Activated CD4-positive, alpha-beta memory T cell treated with anti-CD3 and anti-CD28 coated beads for 36 hours (primary cell): ENCODE measurements at regions of chr4 and their contacts with region 1.

Region 1: DNA sequence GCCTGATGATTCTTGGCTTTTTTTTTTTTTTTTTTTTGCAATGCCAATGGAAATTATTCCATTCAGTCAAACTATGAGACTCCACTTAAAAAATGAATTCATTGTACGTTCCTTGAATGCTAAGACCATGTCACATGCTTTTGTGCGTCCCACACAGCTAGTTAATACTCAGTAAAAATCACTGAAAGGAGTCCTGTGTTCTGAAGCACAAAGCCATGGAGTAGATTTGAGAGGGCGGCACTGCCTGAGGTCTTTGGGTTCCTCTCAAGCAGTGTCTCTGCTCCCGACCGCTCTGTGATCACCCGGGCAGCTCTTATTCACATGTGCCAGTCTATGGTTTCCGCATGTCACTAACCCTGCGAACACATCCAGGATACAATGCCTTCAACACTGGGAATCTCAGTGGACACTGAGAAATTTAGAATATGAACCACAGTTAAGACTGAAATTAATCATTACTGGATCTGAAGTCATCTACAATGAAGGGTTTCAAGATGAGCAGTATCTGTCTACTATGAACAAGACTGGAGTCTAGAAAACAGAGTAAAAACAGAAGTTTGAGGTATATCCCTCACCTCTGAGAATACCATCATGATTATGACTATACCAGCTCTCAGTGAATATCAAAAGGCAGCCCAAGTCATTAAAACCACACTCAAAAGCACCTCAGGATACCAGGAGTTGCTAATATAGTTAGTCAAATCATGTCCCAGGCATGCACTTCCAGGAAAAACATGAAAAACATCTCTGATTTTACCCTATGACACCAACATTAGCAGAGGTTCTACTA is 193.0 kb downstream of the MGST2 start:
- DNase-seq: peak; percentile 39
- H3K4me3 Mint-ChIP-seq: no peak overlapping the region
- H3K27ac Mint-ChIP-seq: peak overlapping the region; percentile 38
- H3K4me1 Mint-ChIP-seq: peaks cover 26% of the 10 kb centered on the region
- H3K27me3 Mint-ChIP-seq: peaks cover 23% of the 10 kb centered on the region

Region 2: DNA sequence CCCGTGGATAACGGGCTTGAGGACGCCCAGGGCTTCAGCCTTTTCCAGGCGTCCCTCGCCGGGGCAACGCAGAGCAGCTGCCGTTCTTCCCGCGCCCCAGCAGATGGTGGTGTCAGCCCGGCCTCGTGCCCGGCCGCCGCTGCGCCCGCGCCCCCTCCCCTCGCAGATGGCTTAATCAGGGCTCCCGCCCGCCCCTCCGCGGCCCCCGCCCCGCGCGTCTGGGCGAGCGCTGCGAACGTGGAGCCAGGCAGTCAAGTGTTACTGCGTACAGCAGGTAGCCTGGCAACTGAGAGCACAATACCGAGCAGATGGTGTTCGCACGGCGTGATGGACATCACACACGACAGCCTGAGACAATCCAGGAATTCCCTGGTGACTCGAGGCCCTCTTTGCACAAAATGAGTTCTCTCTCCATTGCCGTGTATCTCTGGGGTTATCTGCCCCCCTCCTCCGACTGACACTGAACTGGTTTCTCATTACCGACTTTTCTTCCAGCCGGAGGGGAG is 123.7 kb before region 1 on chr4:
- CTCF ChIA-PET with region 1: no interaction called
- POLR2A ChIA-PET with region 1: no interaction called
- intact Hi-C with region 1: loop called (anchors 5 kb)
- DNase-seq: peak; percentile 73
- H3K4me3 Mint-ChIP-seq: peak overlapping the region; percentile 46
- H3K27ac Mint-ChIP-seq: no peak overlapping the region
- H3K4me1 Mint-ChIP-seq: peaks cover 16% of the 10 kb centered on the region
- H3K27me3 Mint-ChIP-seq: peaks cover 40% of the 10 kb centered on the region

Region 3: DNA sequence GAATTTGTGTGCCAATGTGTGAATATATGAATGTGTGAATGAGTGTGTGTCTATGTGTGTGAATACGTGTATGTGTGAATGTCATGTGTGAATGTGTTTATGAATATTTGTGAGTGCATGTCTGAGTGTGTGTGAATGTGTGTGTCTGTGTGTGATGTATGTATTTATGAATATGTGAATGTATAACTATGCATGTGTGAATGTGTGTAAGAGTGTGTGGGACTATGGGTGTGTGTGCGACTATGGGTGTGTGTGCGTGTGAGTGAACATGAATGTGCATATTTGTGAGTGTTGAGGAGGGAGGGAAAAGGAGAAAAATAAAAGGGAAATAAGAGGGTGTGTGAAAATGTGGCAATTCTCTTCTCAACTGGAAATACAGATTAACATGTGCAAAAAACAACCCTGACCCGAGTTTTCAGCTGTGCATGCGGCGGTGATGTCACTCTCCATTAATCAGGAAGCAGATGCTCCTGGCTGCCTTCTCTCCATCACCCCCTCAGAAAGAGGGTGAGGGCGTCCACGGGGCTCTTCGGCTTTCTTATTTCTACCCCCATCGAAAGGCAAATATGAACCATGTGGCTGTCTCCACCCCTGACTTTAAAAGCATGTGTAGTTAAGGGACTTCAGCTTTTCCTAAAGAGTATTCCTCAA is 75.6 kb after region 1 on chr4:
- CTCF ChIA-PET with region 1: no interaction called
- POLR2A ChIA-PET with region 1: no interaction called
- intact Hi-C with region 1: no loop called
- DNase-seq: no peak
- H3K4me3 Mint-ChIP-seq: no peak overlapping the region
- H3K27ac Mint-ChIP-seq: no peak overlapping the region
- H3K4me1 Mint-ChIP-seq: no peaks in the 10 kb centered on the region
- H3K27me3 Mint-ChIP-seq: peaks cover 4% of the 10 kb centered on the region

Region 4: GRCh38 chr4:139950568-139950967 is 91.9 kb after region 1 on chr4:
- CTCF ChIA-PET with region 1: no interaction called
- POLR2A ChIA-PET with region 1: no interaction called
- intact Hi-C with region 1: loop called (anchors 1 kb)
- DNase-seq: peak; percentile 61
- H3K4me3 Mint-ChIP-seq: no peak overlapping the region
- H3K27ac Mint-ChIP-seq: peak overlapping the region; percentile 36
- H3K4me1 Mint-ChIP-seq: peaks cover 15% of the 10 kb centered on the region
- H3K27me3 Mint-ChIP-seq: peaks cover 2% of the 10 kb centered on the region

Region 5: GRCh38 chr4:140071806-140072205 is 213.2 kb after region 1 on chr4:
- CTCF ChIA-PET with region 1: no interaction called
- POLR2A ChIA-PET with region 1: no interaction called
- intact Hi-C with region 1: loop called (anchors 1 kb)
- DNase-seq: peak; percentile 85
- H3K4me3 Mint-ChIP-seq: no peak overlapping the region
- H3K27ac Mint-ChIP-seq: peak overlapping the region; percentile 60
- H3K4me1 Mint-ChIP-seq: peaks cover 29% of the 10 kb centered on the region
- H3K27me3 Mint-ChIP-seq: peaks cover 28% of the 10 kb centered on the region

Region 6: GRCh38 chr4:140252742-140253555 is 394.3 kb after region 1 on chr4:
- CTCF ChIA-PET with region 1: no interaction called
- POLR2A ChIA-PET with region 1: no interaction called
- intact Hi-C with region 1: loop called (anchors 5 kb)
- DNase-seq: peak; percentile 63
- H3K4me3 Mint-ChIP-seq: peak overlapping the region; percentile 55
- H3K27ac Mint-ChIP-seq: no peak overlapping the region
- H3K4me1 Mint-ChIP-seq: peaks cover 17% of the 10 kb centered on the region
- H3K27me3 Mint-ChIP-seq: peaks cover 20% of the 10 kb centered on the region